Naive thymus-derived CD4-positive, alpha-beta T cell (primary cell): ENCODE measurements at regions of chr6 and their contacts with region 1.

Region 1: GRCh38 chr6:158026054-158026900 is 44.6 kb downstream of the SYNJ2 start:
- DNase-seq: peak; percentile 67 to 94 (median 82)
- ATAC-seq: peak; percentile 84
- H3K4me3 ChIP-seq: peak overlapping the region; percentile 44
- H3K4me3 Mint-ChIP-seq: peak overlapping the region; percentile 79 to 86 (median 84)
- H3K27ac ChIP-seq: peak overlapping the region; percentile 73
- H3K27ac Mint-ChIP-seq: peak overlapping the region; percentile 88 to 98 (median 97)
- H3K4me1 ChIP-seq: peaks cover 22 to 23% of the 10 kb centered on the region in 2 donors
- H3K4me1 Mint-ChIP-seq: peaks cover 20 to 40% (median 35%) of the 10 kb centered on the region in 7 donors
- H3K27me3 ChIP-seq: no peaks in the 10 kb centered on the region
- H3K27me3 Mint-ChIP-seq: no peaks in the 10 kb centered on the region

Region 2: GRCh38 chr6:157667211-157668008 is 358.9 kb before region 1 on chr6:
- CTCF ChIA-PET with region 1: no interaction called
- POLR2A ChIA-PET with region 1: no interaction called
- intact Hi-C with region 1: loop called in 1 of 2 experiments (anchors 5 kb)
- DNase-seq: peak in 8 of 9 donors; percentile 28 to 67 (median 54)
- ATAC-seq: peak; percentile 83
- H3K4me3 ChIP-seq: no peak overlapping the region
- H3K4me3 Mint-ChIP-seq: peak overlapping the region in 4 of 10 donors; percentile 1 to 35 (median 10)
- H3K27ac ChIP-seq: no peak overlapping the region
- H3K27ac Mint-ChIP-seq: peak overlapping the region in 7 of 9 donors; percentile 4 to 38 (median 19)
- H3K4me1 ChIP-seq: peaks cover 0 to 15% of the 10 kb centered on the region in 2 donors
- H3K4me1 Mint-ChIP-seq: peaks cover 7 to 31% (median 23%) of the 10 kb centered on the region in 7 donors
- H3K27me3 ChIP-seq: no peaks in the 10 kb centered on the region
- H3K27me3 Mint-ChIP-seq: peaks cover 0 to 6% (median 0%) of the 10 kb centered on the region in 5 donors

Region 3: GRCh38 chr6:157732021-157732417 is 294.3 kb before region 1 on chr6:
- CTCF ChIA-PET with region 1: no interaction called
- POLR2A ChIA-PET with region 1: no interaction called
- intact Hi-C with region 1: no loop called
- DNase-seq: no peak
- ATAC-seq: no peak
- H3K4me3 ChIP-seq: no peak overlapping the region
- H3K4me3 Mint-ChIP-seq: no peak overlapping the region
- H3K27ac ChIP-seq: no peak overlapping the region
- H3K27ac Mint-ChIP-seq: no peak overlapping the region
- H3K4me1 ChIP-seq: no peaks in the 10 kb centered on the region
- H3K4me1 Mint-ChIP-seq: no peaks in the 10 kb centered on the region
- H3K27me3 ChIP-seq: no peaks in the 10 kb centered on the region
- H3K27me3 Mint-ChIP-seq: peaks cover 0 to 2% (median 0%) of the 10 kb centered on the region in 5 donors

Region 4: GRCh38 chr6:157885211-157885788 is 141.0 kb before region 1 on chr6:
- CTCF ChIA-PET with region 1: interaction called, 5 read pairs
- POLR2A ChIA-PET with region 1: no interaction called
- intact Hi-C with region 1: loop called in 1 of 2 experiments (anchors 1 kb)
- DNase-seq: peak in 7 of 9 donors; percentile 74 to 90 (median 86)
- ATAC-seq: peak; percentile 89
- H3K4me3 ChIP-seq: no peak overlapping the region
- H3K4me3 Mint-ChIP-seq: peak overlapping the region; percentile 30 to 78 (median 54)
- H3K27ac ChIP-seq: peak overlapping the region; percentile 93
- H3K27ac Mint-ChIP-seq: peak overlapping the region; percentile 86 to 99 (median 96)
- H3K4me1 ChIP-seq: peaks cover 0 to 33% of the 10 kb centered on the region in 2 donors
- H3K4me1 Mint-ChIP-seq: peaks cover 31 to 92% (median 85%) of the 10 kb centered on the region in 7 donors
- H3K27me3 ChIP-seq: no peaks in the 10 kb centered on the region
- H3K27me3 Mint-ChIP-seq: peaks cover 0 to 3% (median 0%) of the 10 kb centered on the region in 5 donors

Region 5: DNA sequence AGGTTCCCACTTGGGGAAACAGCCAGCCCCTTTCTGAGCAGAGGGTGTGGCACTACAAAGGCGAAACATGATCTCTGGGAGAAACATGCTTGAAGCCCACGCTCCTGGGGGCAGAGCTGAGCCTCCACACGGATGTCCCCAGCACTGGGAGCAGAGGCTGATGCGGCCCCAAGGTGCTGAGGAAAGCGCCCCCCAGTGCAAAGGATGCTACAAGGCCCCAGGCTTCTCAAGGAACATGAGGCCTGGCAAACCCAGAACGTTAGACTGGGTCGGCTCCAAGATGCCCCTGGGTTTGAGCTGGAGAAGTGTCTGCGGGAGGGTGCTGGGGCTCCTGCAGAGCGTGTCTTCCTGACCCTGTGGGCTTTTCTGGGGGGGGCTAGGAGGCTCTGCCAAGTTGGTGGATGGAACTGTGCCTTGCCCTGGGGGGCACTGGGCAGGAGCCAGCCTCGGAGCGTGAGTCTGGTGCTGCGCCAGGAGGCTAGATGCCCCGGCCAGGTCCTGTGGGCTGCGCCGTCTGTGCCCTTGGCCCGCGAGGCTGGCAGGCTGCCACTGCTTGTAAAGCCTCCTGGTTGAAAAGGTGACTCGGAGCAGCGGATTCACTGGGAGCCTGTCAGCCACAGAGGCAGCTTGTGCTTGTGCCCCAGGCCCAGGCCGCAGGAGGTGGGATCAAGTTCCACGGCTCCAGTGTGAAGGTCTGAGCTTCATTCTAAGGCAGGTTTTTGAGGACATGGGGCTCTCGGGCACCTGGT is 36.6 kb before region 1 on chr6:
- CTCF ChIA-PET with region 1: interaction called, 19 read pairs
- POLR2A ChIA-PET with region 1: interaction called, 20 read pairs
- intact Hi-C with region 1: loop called in 1 of 2 experiments (anchors 2 kb)
- DNase-seq: peak in 1 of 9 donors; percentile 23
- ATAC-seq: peak; percentile 22
- H3K4me3 ChIP-seq: peak overlapping the region; percentile 25
- H3K4me3 Mint-ChIP-seq: peak overlapping the region; percentile 84 to 90 (median 87)
- H3K27ac ChIP-seq: peak overlapping the region; percentile 71
- H3K27ac Mint-ChIP-seq: peak overlapping the region; percentile 75 to 98 (median 95)
- H3K4me1 ChIP-seq: peaks cover 5 to 50% of the 10 kb centered on the region in 2 donors
- H3K4me1 Mint-ChIP-seq: peaks cover 38 to 91% (median 73%) of the 10 kb centered on the region in 7 donors
- H3K27me3 ChIP-seq: no peaks in the 10 kb centered on the region
- H3K27me3 Mint-ChIP-seq: no peaks in the 10 kb centered on the region

Region 6: GRCh38 chr6:158047127-158047518 is 20.8 kb after region 1 on chr6:
- CTCF ChIA-PET with region 1: interaction called, 26 read pairs
- POLR2A ChIA-PET with region 1: interaction called, 5 read pairs
- intact Hi-C with region 1: loop called in 1 of 2 experiments (anchors 1 kb)
- DNase-seq: peak in 6 of 9 donors; percentile 21 to 70 (median 35)
- ATAC-seq: peak; percentile 23
- H3K4me3 ChIP-seq: no peak overlapping the region
- H3K4me3 Mint-ChIP-seq: peak overlapping the region; percentile 27 to 84 (median 69)
- H3K27ac ChIP-seq: no peak overlapping the region
- H3K27ac Mint-ChIP-seq: peak overlapping the region; percentile 59 to 91 (median 81)
- H3K4me1 ChIP-seq: peaks cover 0 to 22% of the 10 kb centered on the region in 2 donors
- H3K4me1 Mint-ChIP-seq: peaks cover 22 to 32% (median 30%) of the 10 kb centered on the region in 7 donors
- H3K27me3 ChIP-seq: no peaks in the 10 kb centered on the region
- H3K27me3 Mint-ChIP-seq: no peaks in the 10 kb centered on the region

Region 7: GRCh38 chr6:158168040-158168289 is 141.7 kb after region 1 on chr6 and contains the start of gene SERAC1:
- CTCF ChIA-PET with region 1: no interaction called
- POLR2A ChIA-PET with region 1: no interaction called
- intact Hi-C with region 1: loop called (anchors 2 kb)
- DNase-seq: no peak
- ATAC-seq: peak; percentile 59
- H3K4me3 ChIP-seq: peak within 1 kb of the TSS; percentile 88
- H3K4me3 Mint-ChIP-seq: peak within 1 kb of the TSS; percentile 81 to 96 (median 96)
- H3K27ac ChIP-seq: peak within 1 kb of the TSS; percentile 96
- H3K27ac Mint-ChIP-seq: peak within 1 kb of the TSS; percentile 90 to 99 (median 98)
- H3K4me1 ChIP-seq: peaks cover 0 to 5% of the 10 kb centered on the region in 2 donors
- H3K4me1 Mint-ChIP-seq: peaks cover 14 to 46% (median 27%) of the 10 kb centered on the region in 7 donors
- H3K27me3 ChIP-seq: no peaks in the 10 kb centered on the region
- H3K27me3 Mint-ChIP-seq: no peaks in the 10 kb centered on the region
- total RNA-seq, gene SERAC1: 2.4 to 5.4 (median 4.6) TPM

Region 8: GRCh38 chr6:158387036-158387435 is 360.8 kb after region 1 on chr6:
- CTCF ChIA-PET with region 1: no interaction called
- POLR2A ChIA-PET with region 1: no interaction called
- intact Hi-C with region 1: no loop called
- DNase-seq: peak in 4 of 9 donors; percentile 5 to 17 (median 10)
- ATAC-seq: peak; percentile 20
- H3K4me3 ChIP-seq: no peak overlapping the region
- H3K4me3 Mint-ChIP-seq: no peak overlapping the region
- H3K27ac ChIP-seq: no peak overlapping the region
- H3K27ac Mint-ChIP-seq: no peak overlapping the region
- H3K4me1 ChIP-seq: no peaks in the 10 kb centered on the region
- H3K4me1 Mint-ChIP-seq: peaks cover 0 to 24% (median 16%) of the 10 kb centered on the region in 7 donors
- H3K27me3 ChIP-seq: no peaks in the 10 kb centered on the region
- H3K27me3 Mint-ChIP-seq: no peaks in the 10 kb centered on the region